ENCODE measurements at regions of chr9 and their contacts with region 1.

Region 1: DNA sequence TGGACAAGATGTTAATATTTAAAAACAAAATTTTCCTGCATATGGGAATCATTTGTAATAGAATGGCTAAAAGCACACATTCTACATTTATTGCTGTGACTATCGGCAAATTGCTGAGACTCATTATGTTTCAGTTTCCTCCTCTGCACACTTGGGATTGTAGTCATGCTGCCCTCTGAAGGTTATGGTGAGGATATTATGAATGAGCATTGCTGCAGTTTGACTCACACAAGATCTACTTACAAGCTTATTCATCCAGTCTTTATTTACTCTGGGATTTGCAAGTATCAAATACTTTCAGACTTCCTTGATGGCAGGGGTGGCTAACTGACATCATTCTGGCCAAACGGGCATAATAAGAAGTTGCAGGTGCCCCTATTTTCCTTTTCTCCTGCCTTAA is 9.5 kb upstream of the NFIL3 start:
- DNase-seq: no peak
- H3K4me3 ChIP-seq: no peak overlapping the region
- H3K27ac ChIP-seq: no peak overlapping the region
- H3K4me1 ChIP-seq: peaks cover 0 to 3% (median 0%) of the 10 kb centered on the region in 4 donors
- H3K27me3 ChIP-seq: no peaks in the 10 kb centered on the region
- CTCF ChIP-seq: peak; percentile 59 to 69

Region 2: DNA sequence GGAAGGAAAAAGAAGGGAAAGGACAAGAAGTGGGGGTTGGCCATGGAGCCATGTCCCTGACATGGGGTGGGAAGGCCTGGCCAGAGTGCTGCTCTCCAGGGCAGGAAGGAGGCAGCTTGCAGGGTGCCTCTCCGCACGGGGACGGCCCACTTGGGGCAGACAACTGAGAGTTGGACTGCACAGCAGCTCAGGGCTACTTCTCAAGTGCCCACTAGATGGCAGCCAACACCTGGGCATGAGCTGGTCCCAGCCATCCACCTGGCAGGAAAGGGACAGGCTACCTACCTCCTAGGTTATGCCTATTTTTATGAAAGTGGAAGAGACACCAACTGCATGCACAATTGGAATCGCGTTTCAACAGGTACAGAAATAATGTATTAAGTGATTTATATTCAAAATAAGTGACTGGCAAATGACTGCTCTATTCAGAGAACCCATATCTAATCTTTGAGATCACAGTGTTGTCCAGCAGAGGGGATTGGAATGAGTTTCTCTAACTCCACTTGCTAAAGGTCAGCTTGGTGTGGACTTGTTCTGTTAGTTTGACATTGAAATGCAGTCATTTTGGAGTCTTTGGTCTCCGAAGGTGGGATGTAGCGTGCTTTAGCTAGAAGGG is 518.2 kb before region 1 on chr9:
- intact Hi-C with region 1: loop called (anchors 2 kb)
- DNase-seq: peak; percentile 56 to 75
- H3K4me3 ChIP-seq: no peak overlapping the region
- H3K27ac ChIP-seq: no peak overlapping the region
- H3K4me1 ChIP-seq: peaks cover 0 to 13% (median 12%) of the 10 kb centered on the region in 4 donors
- H3K27me3 ChIP-seq: peaks cover 0 to 14% of the 10 kb centered on the region in 2 donors
- CTCF ChIP-seq: peak; percentile 93 to 95

Region 3: GRCh38 chr9:91036826-91037510 is 396.2 kb before region 1 on chr9:
- intact Hi-C with region 1: loop called (anchors 2 kb)
- DNase-seq: peak; percentile 88 to 90
- H3K4me3 ChIP-seq: no peak overlapping the region
- H3K27ac ChIP-seq: no peak overlapping the region
- H3K4me1 ChIP-seq: peaks cover 0 to 19% (median 13%) of the 10 kb centered on the region in 4 donors
- H3K27me3 ChIP-seq: peaks cover 0 to 2% of the 10 kb centered on the region in 2 donors
- CTCF ChIP-seq: peak; percentile 58

Region 4: DNA sequence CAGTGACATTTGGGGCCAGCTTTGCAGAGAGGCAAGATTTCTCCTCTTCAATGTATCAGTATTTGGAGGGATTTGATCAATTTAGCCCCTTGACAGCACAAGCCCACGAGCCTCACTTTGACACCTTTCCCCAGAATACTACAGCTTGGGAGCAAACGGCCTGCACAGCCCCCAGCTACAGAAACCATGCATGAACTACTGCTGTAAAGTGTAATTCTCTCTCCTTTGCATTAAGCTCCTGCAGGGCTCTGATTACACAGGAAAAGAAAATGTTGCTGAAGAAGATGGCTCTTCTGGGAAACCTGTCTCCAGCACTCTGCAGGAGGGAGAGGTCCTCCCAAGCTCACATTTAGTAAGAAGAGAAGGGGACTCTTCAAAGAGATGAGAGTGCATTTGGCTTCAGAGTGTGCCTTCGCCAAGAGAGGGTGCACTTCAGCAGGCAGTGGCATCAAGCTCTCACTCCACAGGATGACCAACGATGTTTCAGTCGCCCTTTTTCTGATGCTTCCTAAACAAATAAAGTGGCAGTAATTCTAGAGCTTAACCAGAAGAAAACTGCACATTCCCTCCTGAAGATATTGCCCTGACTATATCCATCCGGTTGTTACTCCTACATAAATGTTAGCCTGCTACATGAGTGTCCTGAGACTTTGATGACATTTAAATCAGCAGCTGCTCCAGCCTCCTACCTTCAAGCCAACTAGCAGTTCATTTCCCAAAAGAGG is 343.6 kb before region 1 on chr9:
- intact Hi-C with region 1: loop called (anchors 5 kb)
- DNase-seq: no peak
- H3K4me3 ChIP-seq: no peak overlapping the region
- H3K27ac ChIP-seq: no peak overlapping the region
- H3K4me1 ChIP-seq: no peaks in the 10 kb centered on the region
- H3K27me3 ChIP-seq: no peaks in the 10 kb centered on the region
- CTCF ChIP-seq: peak; percentile 24 to 43

Region 5: GRCh38 chr9:91285729-91286353 is 147.3 kb before region 1 on chr9:
- intact Hi-C with region 1: no loop called
- DNase-seq: no peak
- H3K4me3 ChIP-seq: no peak overlapping the region
- H3K27ac ChIP-seq: no peak overlapping the region
- H3K4me1 ChIP-seq: peaks cover 0 to 8% (median 2%) of the 10 kb centered on the region in 4 donors
- H3K27me3 ChIP-seq: no peaks in the 10 kb centered on the region
- CTCF ChIP-seq: no peak

Region 6: DNA sequence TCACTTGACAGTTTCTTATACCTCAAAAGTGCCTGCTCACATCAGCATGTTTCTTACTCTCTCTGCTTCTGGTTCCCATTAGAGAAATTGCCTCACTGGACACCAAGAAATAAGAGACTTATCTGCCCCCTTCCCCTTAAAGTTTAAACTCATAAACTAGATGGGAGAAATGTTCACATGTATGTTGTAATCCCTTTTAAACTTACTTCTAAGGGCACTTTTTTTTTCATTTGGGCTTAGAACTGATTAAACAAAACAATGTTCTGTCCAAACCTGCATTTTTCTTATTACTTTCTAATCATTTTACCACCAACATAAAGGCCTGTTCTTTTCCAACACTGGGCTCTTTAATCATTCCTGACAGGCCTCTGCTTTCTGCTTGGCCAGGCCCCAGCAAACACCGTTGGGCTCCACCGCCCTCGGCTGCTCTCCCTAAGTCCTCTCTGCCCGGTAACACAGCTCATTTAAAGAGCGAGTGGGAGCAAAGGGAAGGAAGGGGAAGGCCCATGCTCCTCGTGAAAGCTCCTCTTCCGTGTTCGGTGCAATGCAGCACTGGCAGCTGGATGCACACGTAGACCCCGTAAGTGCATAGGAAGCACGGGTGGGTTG is 463.4 kb after region 1 on chr9:
- intact Hi-C with region 1: no loop called
- DNase-seq: no peak
- H3K4me3 ChIP-seq: no peak overlapping the region
- H3K27ac ChIP-seq: no peak overlapping the region
- H3K4me1 ChIP-seq: peaks cover 0 to 12% (median 0%) of the 10 kb centered on the region in 4 donors
- H3K27me3 ChIP-seq: peaks cover 0 to 34% of the 10 kb centered on the region in 2 donors
- CTCF ChIP-seq: no peak

Measured in tibial artery (tissue), 4 donors.